Ovary (tissue), 10 donors: ENCODE measurements at regions of chr12 and their contacts with region 1.

Region 1: GRCh38 chr12:113161414-113162016 is 12.0 kb downstream of the CFAP73 start:
- DNase-seq: no peak
- H3K4me3 ChIP-seq: no peak overlapping the region
- H3K27ac ChIP-seq: no peak overlapping the region
- H3K4me1 ChIP-seq: no peaks in the 10 kb centered on the region
- H3K27me3 ChIP-seq: no peaks in the 10 kb centered on the region
- CTCF ChIP-seq: no peak
- EP300 ChIP-seq: no peak
- POLR2A ChIP-seq: no peak

Region 2: GRCh38 chr12:113048716-113049127 is 112.8 kb before region 1 on chr12:
- intact Hi-C with region 1: loop called in 2 of 4 experiments (anchors 5 to 10 kb)
- DNase-seq: peak in 2 of 5 donors; percentile 17 to 52
- H3K4me3 ChIP-seq: no peak overlapping the region
- H3K27ac ChIP-seq: no peak overlapping the region
- H3K4me1 ChIP-seq: no peaks in the 10 kb centered on the region
- H3K27me3 ChIP-seq: no peaks in the 10 kb centered on the region
- CTCF ChIP-seq: peak; percentile 41 to 54 (median 43)
- EP300 ChIP-seq: no peak
- POLR2A ChIP-seq: no peak

Region 3: DNA sequence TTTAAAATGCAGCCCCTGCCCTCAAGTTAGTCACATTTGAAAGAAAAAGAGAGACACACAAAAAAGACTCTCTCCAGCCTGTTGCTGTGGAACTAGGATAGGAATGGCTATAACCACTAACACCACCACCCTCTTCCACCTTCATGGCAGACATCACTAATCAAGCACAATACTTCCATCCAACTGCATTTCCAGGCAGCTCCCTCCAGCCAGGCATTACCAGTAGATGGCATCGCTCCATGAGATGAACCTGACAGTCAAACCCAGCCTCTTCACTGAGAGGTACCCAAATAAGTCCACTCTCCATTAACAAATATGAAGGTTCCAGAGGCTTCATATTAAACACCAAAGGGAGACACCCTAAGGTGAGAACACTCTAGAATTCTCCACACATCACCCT is 149.0 kb after region 1 on chr12:
- intact Hi-C with region 1: no loop called
- DNase-seq: no peak
- H3K4me3 ChIP-seq: no peak overlapping the region
- H3K27ac ChIP-seq: no peak overlapping the region
- H3K4me1 ChIP-seq: no peaks in the 10 kb centered on the region
- H3K27me3 ChIP-seq: no peaks in the 10 kb centered on the region
- CTCF ChIP-seq: no peak
- EP300 ChIP-seq: no peak
- POLR2A ChIP-seq: no peak

Region 4: GRCh38 chr12:113591480-113591974 is 430.0 kb after region 1 on chr12:
- intact Hi-C with region 1: no loop called
- DNase-seq: no peak
- H3K4me3 ChIP-seq: no peak overlapping the region
- H3K27ac ChIP-seq: no peak overlapping the region
- H3K4me1 ChIP-seq: no peaks in the 10 kb centered on the region
- H3K27me3 ChIP-seq: no peaks in the 10 kb centered on the region
- CTCF ChIP-seq: no peak
- EP300 ChIP-seq: no peak
- POLR2A ChIP-seq: no peak